HAP-1 (cell line): ENCODE measurements at regions of chr6 and their contacts with region 1.

Region 1: GRCh38 chr6:144013486-144013909 is 5.4 kb upstream of the PLAGL1 start:
- DNase-seq: peak; percentile 60 to 81
- H3K4me3 ChIP-seq: no peak overlapping the region
- H3K4me1 ChIP-seq: no peaks in the 10 kb centered on the region
- H3K27me3 ChIP-seq: no peaks in the 10 kb centered on the region

Region 2: DNA sequence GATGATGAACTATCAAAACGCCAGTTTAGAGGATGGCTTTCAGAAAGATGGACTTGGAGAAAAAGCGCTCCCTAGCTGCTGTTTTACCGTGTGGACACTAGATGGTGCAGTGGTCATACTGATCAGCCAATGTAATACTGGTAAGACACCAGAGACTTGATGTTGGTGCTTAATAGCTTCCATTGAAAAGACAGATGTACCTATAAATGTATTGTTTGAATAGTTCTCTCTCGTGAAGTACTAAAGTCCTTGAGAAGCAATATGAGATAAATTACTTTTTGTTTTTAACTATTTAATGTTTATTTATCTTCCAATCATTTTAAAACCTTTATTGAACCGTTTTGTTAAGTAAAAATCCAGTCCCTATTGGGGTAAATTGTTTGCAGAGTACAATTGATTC is 438.1 kb before region 1 on chr6:
- in situ Hi-C with region 1: loop called (anchors 10 kb)
- DNase-seq: peak; percentile 61 to 70
- H3K4me3 ChIP-seq: no peak overlapping the region
- H3K4me1 ChIP-seq: no peaks in the 10 kb centered on the region
- H3K27me3 ChIP-seq: no peaks in the 10 kb centered on the region; the same call in 1 of the 2 replicates

Region 3: DNA sequence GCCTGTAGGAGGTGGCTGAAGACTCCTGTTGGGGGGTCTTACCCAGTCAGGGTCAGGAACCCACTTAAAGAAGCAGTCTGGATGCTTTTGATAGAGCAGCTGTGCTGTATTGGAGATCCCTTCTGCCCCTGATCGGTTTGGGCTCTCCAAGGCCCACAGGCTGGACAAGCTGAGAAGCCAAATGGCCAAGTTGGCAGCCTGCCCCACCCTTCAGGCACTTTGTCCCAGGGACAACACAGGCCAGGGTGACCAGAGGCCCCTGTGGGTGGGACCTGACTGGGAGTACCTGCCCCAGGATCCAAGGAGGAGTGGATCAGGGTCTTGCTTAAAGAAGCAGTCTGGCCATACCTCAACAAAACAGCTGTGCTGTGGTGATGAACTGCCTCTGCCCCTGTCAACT is 100.8 kb before region 1 on chr6:
- in situ Hi-C with region 1: no loop called
- DNase-seq: no peak
- H3K4me3 ChIP-seq: no peak overlapping the region
- H3K4me1 ChIP-seq: no peaks in the 10 kb centered on the region
- H3K27me3 ChIP-seq: no peaks in the 10 kb centered on the region

Region 4: DNA sequence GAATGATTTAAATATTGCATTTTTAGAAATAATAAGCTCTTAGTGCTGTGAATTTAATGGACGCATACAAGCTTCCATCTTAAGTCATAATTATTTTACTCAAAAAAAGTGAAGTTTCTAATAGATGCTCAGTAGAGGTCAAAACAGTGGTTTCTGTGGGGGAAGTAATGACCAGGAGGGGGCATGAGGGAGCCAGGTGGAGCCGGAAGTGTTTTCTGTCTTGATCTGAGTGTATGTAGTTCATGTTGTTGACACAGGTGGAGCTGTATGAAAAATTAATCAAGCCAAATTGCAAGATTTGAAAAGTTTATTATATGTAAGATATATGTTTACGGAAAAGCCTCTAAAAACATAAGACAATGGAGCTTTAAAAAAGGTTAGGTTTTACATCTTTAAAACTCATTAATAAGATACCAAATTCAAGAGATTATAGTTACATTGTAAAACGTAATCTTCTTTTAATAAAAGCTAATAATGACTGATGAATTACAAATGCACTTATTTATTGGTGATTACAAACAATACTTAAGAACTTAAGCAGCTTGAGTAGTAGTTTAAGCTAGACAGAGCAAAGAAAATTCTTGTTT is 73.4 kb before region 1 on chr6:
- in situ Hi-C with region 1: loop called (anchors 5 kb)
- DNase-seq: peak; percentile 58 to 72
- H3K4me3 ChIP-seq: no peak overlapping the region
- H3K4me1 ChIP-seq: peaks cover 5% of the 10 kb centered on the region; the same call in 1 of the 2 replicates
- H3K27me3 ChIP-seq: no peaks in the 10 kb centered on the region; the same call in 1 of the 2 replicates

Region 5: DNA sequence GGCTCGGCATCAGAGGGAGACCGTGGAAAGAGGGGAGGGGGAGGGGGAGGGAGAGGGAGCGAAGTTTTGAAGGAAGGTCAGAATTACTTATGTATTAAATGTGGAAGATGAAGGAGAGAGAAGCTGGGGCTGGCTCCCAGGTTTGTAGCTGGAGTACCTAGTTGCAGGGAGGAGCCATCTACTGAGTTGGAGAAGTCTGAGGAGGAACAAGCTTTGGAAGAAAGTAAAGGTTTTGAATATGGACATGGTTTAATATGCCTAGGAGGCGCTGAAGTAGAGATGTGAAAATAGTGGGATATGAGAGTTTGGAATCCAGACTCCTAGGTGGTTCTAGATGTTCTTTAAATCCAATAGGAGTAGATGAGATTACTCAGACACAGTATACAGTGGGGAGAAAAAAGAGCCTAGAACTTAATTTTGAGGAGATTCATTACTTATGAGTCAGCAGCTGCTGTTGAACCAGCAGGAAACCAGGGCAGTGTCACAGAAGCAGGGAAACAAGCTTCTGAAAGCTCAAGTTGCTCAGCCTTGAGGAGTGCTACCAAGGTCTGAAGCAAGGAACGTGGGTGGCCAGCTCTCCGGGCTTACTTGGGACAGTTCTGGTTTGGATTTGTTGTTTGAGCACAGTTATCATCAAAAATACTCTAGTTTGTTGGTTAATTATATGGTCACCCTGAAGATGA is 421.0 kb after region 1 on chr6:
- in situ Hi-C with region 1: no loop called
- DNase-seq: no peak
- H3K4me3 ChIP-seq: no peak overlapping the region
- H3K4me1 ChIP-seq: peaks cover 6% of the 10 kb centered on the region
- H3K27me3 ChIP-seq: no peaks in the 10 kb centered on the region